H1 (cell line): ENCODE measurements at regions of chrX and their contacts with region 1.

Region 1: DNA sequence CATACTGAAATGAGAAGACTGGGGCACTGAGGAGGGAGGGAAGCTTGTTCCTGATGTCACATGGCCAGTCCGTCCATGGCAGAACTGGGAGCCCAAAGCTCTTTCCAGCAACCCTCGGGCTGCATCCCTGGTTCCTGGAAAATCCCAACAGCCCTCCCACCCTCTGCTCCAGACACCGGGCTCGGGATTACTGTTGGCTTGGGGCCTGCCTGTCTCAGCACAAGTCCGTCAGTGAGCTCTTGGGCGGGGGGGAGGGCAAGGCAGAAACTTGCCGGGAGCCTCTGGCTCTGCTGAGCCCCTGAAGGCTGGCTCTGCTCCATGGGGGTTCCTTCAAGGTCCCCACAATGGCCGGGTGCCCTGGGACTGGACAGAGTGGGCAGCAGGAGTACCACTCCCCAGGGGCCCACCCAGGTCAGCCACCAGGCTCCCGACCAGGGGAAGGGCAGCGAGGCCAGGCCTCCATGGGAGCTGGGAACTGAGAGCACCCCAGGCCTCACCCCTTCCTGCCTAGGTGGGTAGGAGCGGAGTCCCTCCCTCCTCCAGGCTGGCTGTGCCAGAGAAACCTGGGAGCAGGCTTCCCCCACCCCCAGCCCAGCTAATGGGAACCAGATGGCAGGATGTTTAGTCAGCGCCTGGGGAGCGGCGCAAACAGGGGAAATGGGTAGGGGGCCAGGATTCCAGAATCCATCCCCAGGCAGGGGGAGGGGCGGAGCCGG is 6.4 kb upstream of the HAUS7 start:
- DNase-seq: no peak
- H3K4me3 ChIP-seq: no peak overlapping the region
- H3K27ac ChIP-seq: no peak overlapping the region
- H3K4me1 ChIP-seq: peaks cover 0 to 17% (median 5%) of the 10 kb centered on the region in 4 experiments; a peak in 3 of 7 replicates
- H3K27me3 ChIP-seq: peaks cover 5 to 24% (median 18%) of the 10 kb centered on the region in 4 experiments; a peak in 6 of 7 replicates
- CTCF ChIP-seq: no peak
- EP300 ChIP-seq: no peak
- POLR2A ChIP-seq: no peak
- RAD21 ChIP-seq: no peak

Region 2: GRCh38 chrX:153448556-153449367 is 28.0 kb before region 1 on chrX:
- CTCF ChIA-PET with region 1: no interaction called
- POLR2A ChIA-PET with region 1: no interaction called
- DNase-seq: no peak
- H3K4me3 ChIP-seq: no peak overlapping the region
- H3K27ac ChIP-seq: no peak overlapping the region
- H3K4me1 ChIP-seq: no peaks in the 10 kb centered on the region
- H3K27me3 ChIP-seq: no peaks in the 10 kb centered on the region
- CTCF ChIP-seq: no peak
- EP300 ChIP-seq: no peak
- POLR2A ChIP-seq: no peak
- RAD21 ChIP-seq: no peak

Region 3: GRCh38 chrX:153494541-153495361 is 17.9 kb after region 1 on chrX and contains the start of gene BGN:
- CTCF ChIA-PET with region 1: interaction called, 42 read pairs
- POLR2A ChIA-PET with region 1: interaction called, 5 read pairs
- DNase-seq: peak in 1 of 2 experiments; percentile 55
- H3K4me3 ChIP-seq: peak within 1 kb of the TSS in 3 of 4 experiments; percentile 3 to 52 (median 6); a peak in 4 of 8 replicates
- H3K27ac ChIP-seq: no peak within 1 kb of the TSS
- H3K4me1 ChIP-seq: peaks cover 0 to 18% (median 5%) of the 10 kb centered on the region in 4 experiments; a peak in 3 of 7 replicates
- H3K27me3 ChIP-seq: peaks cover 0 to 2% (median 0%) of the 10 kb centered on the region in 4 experiments; a peak in 5 of 7 replicates
- CTCF ChIP-seq: peak in 2 of 3 experiments; percentile 35 to 56; a peak in 3 of 4 replicates
- EP300 ChIP-seq: no peak
- POLR2A ChIP-seq: no peak
- RAD21 ChIP-seq: peak; percentile 54 to 59
- total RNA-seq, gene BGN: 2.1 and 2.4 TPM in 2 replicates